Left cardiac atrium (tissue), 4 donors: ENCODE measurements at regions of chr10 and their contacts with region 1.

Region 1: DNA sequence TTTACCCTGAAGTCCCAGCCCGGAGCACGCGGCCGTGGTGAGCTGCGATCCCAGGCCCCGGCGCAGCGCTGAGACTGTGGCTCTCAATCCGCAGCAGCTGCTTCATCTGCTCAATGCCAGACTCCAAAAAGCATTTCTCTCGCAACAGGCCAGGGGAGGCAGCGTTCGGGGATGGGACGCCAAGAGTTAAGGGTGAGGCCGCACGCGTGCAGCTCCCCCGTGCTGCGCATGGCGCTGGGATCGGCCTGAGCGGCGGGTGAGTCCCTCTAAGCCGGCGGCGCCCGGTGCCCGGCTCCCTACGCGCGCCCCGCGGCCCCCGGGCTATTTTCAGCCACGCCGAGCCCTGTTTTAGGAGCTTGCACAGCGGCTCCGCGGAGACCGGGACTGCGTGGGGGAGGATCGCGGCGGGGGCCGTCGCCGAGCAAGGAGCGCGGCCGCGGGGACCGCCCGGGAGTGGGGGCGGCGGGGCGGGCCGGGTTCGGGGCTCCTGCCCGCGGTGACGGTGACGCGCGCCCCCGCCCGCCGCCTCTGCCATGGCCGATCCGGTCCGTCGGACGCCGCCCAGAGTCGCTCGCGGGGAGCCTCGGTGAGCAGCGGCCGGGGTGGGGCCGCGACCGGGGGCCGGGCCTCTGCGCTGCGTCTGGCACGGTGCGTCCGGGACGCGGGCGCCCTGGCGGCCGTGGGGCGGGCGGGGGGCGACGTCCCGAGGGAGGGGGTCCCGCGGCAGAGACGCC is 29.4 kb upstream of the JAKMIP3 start:
- DNase-seq: no peak
- ATAC-seq: peak; percentile 62 to 79

Region 2: GRCh38 chr10:132142411-132143161 is 106.3 kb after region 1 on chr10:
- intact Hi-C with region 1: loop called in 1 of 2 experiments (anchors 5 kb)
- DNase-seq: peak; percentile 50
- ATAC-seq: peak; percentile 69 to 78